ENCODE measurements at regions of chr6 and their contacts with region 1.

Region 1: GRCh38 chr6:10747251-10747972 is at the start of gene TMEM14B:
- DNase-seq: peak; percentile 78 to 100
- H3K4me3 ChIP-seq: peak within 1 kb of the TSS; percentile 96
- H3K27ac ChIP-seq: peak within 1 kb of the TSS; percentile 53
- H3K4me1 ChIP-seq: peaks cover 13% of the 10 kb centered on the region; the same call in 1 of the 2 replicates
- H3K27me3 ChIP-seq: no peaks in the 10 kb centered on the region
- CTCF ChIP-seq: no peak
- total RNA-seq, gene TMEM14B: 139 and 168 TPM in 2 replicates

Region 2: DNA sequence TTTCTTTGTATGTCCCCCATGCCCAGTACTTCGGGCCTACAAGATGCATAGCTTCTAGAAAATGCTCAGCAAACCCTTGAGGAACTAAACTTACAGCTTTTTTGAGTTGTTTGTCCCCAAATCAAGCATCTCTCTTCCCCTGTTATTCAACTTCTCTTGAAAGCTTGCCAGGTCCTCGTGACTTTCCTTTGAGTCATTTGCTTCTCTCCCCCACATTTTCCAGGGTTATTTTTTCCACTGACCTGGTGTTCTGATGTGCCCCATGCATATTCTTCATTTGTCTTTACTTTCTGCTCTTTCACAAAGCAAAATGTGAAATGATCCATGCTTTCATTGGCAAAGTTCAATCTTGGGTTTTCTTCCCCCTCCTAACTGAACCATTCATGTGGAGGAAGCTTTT is 537.4 kb before region 1 on chr6:
- CTCF ChIA-PET with region 1: no interaction called
- POLR2A ChIA-PET with region 1: no interaction called
- intact Hi-C with region 1: no loop called
- DNase-seq: peak in 1 of 2 experiments; percentile 9
- H3K4me3 ChIP-seq: no peak overlapping the region
- H3K27ac ChIP-seq: no peak overlapping the region
- H3K4me1 ChIP-seq: peaks cover 8% of the 10 kb centered on the region
- H3K27me3 ChIP-seq: no peaks in the 10 kb centered on the region
- CTCF ChIP-seq: no peak

Region 3: GRCh38 chr6:10528170-10528981 is 219.0 kb before region 1 on chr6:
- CTCF ChIA-PET with region 1: no interaction called
- POLR2A ChIA-PET with region 1: interaction called, 11 read pairs
- intact Hi-C with region 1: no loop called
- DNase-seq: peak; percentile 56 to 91
- H3K4me3 ChIP-seq: peak overlapping the region; percentile 76
- H3K27ac ChIP-seq: peak overlapping the region; percentile 99
- H3K4me1 ChIP-seq: peaks cover 30% of the 10 kb centered on the region
- H3K27me3 ChIP-seq: no peaks in the 10 kb centered on the region
- CTCF ChIP-seq: no peak

Region 4: GRCh38 chr6:10722820-10723566 is 24.4 kb before region 1 on chr6 and contains the start of gene TMEM14C:
- CTCF ChIA-PET with region 1: interaction called, 7 read pairs
- POLR2A ChIA-PET with region 1: interaction called, 9 read pairs
- intact Hi-C with region 1: loop called (anchors 1 kb)
- DNase-seq: peak; percentile 85 to 99
- H3K4me3 ChIP-seq: peak within 1 kb of the TSS; percentile 96
- H3K27ac ChIP-seq: peak within 1 kb of the TSS; percentile 85
- H3K4me1 ChIP-seq: 0 out of 2 replicates have a peak, but pooled peaks cover 10% of the 10 kb centered on the region
- H3K27me3 ChIP-seq: no peaks in the 10 kb centered on the region
- CTCF ChIP-seq: no peak
- total RNA-seq, gene TMEM14C: 154 and 166 TPM in 2 replicates